Activated T-helper 1 cell treated with anti-CD3 and anti-CD28 coated beads, Interleukin-12 subunit alpha, Interleukin-12 subunit beta, Interleukin-2, Interleukin-4 antibody, amounts not matched to agents 30 ng/mL and 10 ng/mL and 1 ng/mL, durations not matched to agents 14 hours and 24 hours and 36 hours (primary cell): ENCODE measurements at regions of chr1 and their contacts with region 1.

Region 1: GRCh38 chr1:22025368-22026155 is 24.1 kb downstream of the CELA3A start:
- DNase-seq: peak; percentile 90
- H3K4me3 Mint-ChIP-seq: peak overlapping the region; percentile 99
- H3K27ac Mint-ChIP-seq: peak overlapping the region; percentile 100
- H3K4me1 Mint-ChIP-seq: peaks cover 55% of the 10 kb centered on the region
- H3K27me3 Mint-ChIP-seq: no peaks in the 10 kb centered on the region

Region 2: DNA sequence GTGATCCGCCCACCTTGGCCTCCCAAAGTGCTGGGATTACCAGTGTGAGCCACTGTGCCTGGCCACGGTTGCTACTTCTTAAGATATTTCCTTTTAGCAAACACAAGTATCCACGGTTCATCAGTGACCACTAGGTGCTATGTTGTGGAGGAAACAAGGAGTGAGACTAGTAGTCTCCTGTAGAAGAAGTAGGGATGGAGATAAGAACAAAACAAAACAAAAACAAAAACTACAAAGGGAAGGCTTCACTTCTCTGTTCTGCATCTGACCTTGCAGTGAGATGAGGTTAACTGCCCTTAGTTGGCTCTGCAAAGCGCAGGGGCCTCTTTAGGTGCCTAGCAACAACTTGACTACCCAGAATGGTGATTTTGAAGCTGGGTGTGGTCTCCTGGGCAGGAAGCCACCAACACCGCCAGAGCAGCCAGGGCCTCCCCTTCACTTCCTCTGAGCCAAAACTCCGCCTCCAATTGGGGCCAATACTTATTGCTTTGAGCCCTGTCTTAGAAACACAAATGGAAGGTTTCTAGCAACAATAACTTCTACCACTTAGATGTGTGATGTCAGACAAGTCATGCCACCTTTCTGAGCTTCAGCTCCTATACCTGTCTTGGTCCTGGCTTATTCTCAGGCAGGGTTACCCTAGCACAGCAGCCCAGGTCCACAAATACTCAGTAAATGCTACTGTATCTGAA is 14.2 kb after region 1 on chr1:
- intact Hi-C with region 1: loop called (anchors 1 kb)
- DNase-seq: peak; percentile 92
- H3K4me3 Mint-ChIP-seq: peak overlapping the region; percentile 62
- H3K27ac Mint-ChIP-seq: peak overlapping the region; percentile 96
- H3K4me1 Mint-ChIP-seq: peaks cover 50% of the 10 kb centered on the region
- H3K27me3 Mint-ChIP-seq: no peaks in the 10 kb centered on the region

Region 3: DNA sequence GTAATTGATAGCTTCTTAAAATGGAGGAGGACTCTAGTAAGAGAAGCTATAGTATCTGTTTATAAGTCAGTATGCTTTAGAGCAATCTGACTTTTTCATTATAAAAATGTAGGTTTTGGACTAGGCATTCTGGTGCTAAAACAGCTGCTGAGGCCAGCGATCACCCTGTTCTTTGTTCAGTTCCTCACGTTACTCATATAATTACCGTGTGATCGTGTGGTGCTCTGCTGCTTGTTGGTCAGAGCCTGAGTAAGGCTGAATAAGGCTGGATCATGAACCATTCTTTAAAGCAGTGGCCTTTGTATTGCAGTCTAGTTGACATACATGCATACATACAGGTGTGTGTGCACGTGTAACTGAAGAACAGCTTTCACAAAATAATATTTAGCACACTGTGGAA is 52.2 kb after region 1 on chr1:
- intact Hi-C with region 1: no loop called
- DNase-seq: no peak
- H3K4me3 Mint-ChIP-seq: no peak overlapping the region
- H3K27ac Mint-ChIP-seq: peak overlapping the region; percentile 35
- H3K4me1 Mint-ChIP-seq: peaks cover 65% of the 10 kb centered on the region
- H3K27me3 Mint-ChIP-seq: no peaks in the 10 kb centered on the region

Region 4: DNA sequence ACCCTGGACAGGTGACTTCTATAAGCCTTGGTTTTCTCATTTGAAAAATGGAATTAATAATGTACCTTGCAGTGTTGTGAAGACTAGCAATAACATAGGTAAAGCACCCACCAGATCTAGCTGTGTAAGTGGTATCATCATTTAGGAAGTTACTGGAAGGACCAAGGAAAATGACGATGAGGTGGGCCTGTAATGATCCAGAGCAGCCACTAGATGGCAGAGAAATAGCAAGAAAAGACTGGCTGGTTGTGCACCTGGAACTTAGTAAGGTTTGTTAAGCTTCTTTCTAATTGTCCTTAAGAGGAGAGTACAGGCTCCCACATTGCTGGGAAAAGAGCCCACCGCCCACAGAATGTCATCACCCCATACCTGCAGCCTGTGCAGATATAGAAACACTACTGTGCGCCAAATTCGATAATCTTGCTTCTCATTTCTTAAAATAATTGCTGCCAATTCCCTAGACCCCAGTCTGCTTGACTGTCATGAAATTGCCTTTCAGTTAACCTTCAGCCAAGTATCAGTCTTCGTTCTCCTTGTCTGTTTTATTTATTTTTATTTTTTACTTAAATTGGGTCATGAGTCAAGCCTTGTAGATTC is 80.1 kb after region 1 on chr1:
- intact Hi-C with region 1: loop called (anchors 2 kb)
- DNase-seq: no peak
- H3K4me3 Mint-ChIP-seq: no peak overlapping the region
- H3K27ac Mint-ChIP-seq: peak overlapping the region; percentile 89
- H3K4me1 Mint-ChIP-seq: peaks cover 50% of the 10 kb centered on the region
- H3K27me3 Mint-ChIP-seq: no peaks in the 10 kb centered on the region